Activated T-helper 2 cell treated with anti-CD3 and anti-CD28 coated beads, Interferon-gamma antibody, Interleukin-2, Interleukin-4, amounts not matched to agents 10 μg/mL and 5 μg/mL and 100 μg/mL, durations not matched to agents 14 hours and 24 hours and 36 hours (primary cell): ENCODE measurements at regions of chr2 and their contacts with region 1.

Region 1: GRCh38 chr2:112481050-112481527 is 867 bp upstream of the TTL start:
- DNase-seq: peak; percentile 81
- H3K4me3 Mint-ChIP-seq: peak overlapping the region; percentile 92
- H3K27ac Mint-ChIP-seq: peak overlapping the region; percentile 94
- H3K4me1 Mint-ChIP-seq: peaks cover 22% of the 10 kb centered on the region
- H3K27me3 Mint-ChIP-seq: no peaks in the 10 kb centered on the region

Region 2: GRCh38 chr2:112187805-112188596 is 293.1 kb before region 1 on chr2:
- intact Hi-C with region 1: loop called (anchors 5 kb)
- DNase-seq: peak; percentile 73
- H3K4me3 Mint-ChIP-seq: peak overlapping the region; percentile 31
- H3K27ac Mint-ChIP-seq: peak overlapping the region; percentile 98
- H3K4me1 Mint-ChIP-seq: peaks cover 70% of the 10 kb centered on the region
- H3K27me3 Mint-ChIP-seq: no peaks in the 10 kb centered on the region

Region 3: DNA sequence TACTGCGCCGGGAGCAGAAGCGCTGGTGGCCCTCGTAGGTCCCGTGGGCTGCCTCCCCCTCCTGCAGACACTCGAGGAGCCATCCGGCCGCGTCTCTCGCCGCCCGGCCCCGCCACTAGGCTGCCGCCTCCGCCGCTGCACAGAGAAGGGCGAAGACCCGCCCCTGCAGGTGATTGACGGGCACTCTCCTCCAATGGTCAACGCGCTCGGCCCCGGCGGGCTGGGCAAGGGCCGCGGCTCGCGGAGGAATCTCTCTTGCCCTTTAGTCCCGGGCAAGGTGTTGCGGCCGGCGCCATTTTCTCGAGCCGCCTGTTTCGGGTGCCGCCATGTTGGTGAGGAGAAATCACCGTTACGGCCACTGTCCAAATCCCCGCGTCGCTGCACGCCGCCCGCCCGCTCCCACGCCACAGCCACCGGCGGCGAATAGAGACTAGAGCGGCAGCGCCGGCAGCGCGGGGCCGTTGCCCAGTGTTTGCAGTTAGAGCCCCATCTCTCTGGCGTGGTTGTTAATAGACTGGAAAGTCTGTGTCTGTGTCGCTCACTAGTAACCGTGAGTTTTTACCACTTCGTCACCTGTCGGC is 205.7 kb before region 1 on chr2 and contains the start of gene ZC3H6:
- intact Hi-C with region 1: loop called (anchors 5 kb)
- DNase-seq: peak; percentile 100
- H3K4me3 Mint-ChIP-seq: peak within 1 kb of the TSS; percentile 93
- H3K27ac Mint-ChIP-seq: peak within 1 kb of the TSS; percentile 98
- H3K4me1 Mint-ChIP-seq: peaks cover 10% of the 10 kb centered on the region
- H3K27me3 Mint-ChIP-seq: no peaks in the 10 kb centered on the region
- total RNA-seq, gene ZC3H6: 8.0 and 8.2 TPM in 2 replicates

Region 4: DNA sequence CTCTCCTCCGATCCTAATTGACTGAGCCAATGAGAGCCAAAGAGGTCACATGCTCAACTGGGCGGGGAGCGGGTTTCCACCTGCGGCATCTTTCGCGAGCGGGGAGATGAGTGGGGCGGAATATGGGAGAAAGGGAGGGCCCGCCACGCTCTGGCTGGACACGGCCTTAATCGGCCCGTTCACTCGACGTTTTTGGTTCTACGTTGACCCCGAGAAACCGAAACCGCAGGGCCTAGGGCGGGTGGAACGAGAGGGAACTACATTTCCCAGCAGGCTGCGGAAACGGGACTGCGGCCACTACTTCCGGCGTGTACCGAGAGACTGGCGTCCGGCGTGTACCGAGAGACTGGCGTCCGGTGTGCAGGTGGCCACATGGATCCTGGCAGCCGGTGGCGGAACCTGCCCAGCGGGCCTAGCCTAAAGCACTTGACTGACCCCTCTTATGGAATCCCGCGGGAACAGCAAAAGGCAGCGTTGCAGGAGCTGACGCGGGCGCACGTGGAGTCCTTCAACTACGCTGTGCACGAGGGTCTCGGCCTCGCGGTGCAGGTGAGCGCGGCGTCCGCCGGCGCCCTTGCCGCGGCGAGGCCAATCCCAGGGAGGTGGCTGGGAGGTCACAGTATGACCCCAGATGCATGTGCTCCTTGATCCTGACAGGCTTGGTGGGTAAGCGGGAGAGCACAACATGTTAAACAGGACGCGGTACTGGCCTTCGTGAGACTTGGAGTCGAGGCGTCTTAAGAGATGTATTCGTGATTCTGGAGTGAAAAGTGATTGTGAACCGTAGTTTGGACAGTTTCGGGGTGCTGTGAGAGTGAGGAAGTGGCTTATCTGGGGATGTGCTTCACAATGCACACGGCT is 61.3 kb after region 1 on chr2 and contains the start of gene POLR1B:
- intact Hi-C with region 1: loop called (anchors 1 kb)
- DNase-seq: peak; percentile 78
- H3K4me3 Mint-ChIP-seq: no peak within 1 kb of the TSS
- H3K27ac Mint-ChIP-seq: no peak within 1 kb of the TSS
- H3K4me1 Mint-ChIP-seq: peaks cover 12% of the 10 kb centered on the region
- H3K27me3 Mint-ChIP-seq: no peaks in the 10 kb centered on the region
- total RNA-seq, gene POLR1B: 58.0 and 68.2 TPM in 2 replicates

Region 5: GRCh38 chr2:112577756-112578155 is 96.7 kb after region 1 on chr2:
- intact Hi-C with region 1: no loop called
- DNase-seq: no peak
- H3K4me3 Mint-ChIP-seq: no peak overlapping the region
- H3K27ac Mint-ChIP-seq: no peak overlapping the region
- H3K4me1 Mint-ChIP-seq: peaks cover 7% of the 10 kb centered on the region
- H3K27me3 Mint-ChIP-seq: no peaks in the 10 kb centered on the region

Region 6: GRCh38 chr2:112726497-112727190 is 245.6 kb after region 1 on chr2:
- intact Hi-C with region 1: loop called (anchors 10 kb)
- DNase-seq: peak; percentile 83
- H3K4me3 Mint-ChIP-seq: no peak overlapping the region
- H3K27ac Mint-ChIP-seq: no peak overlapping the region
- H3K4me1 Mint-ChIP-seq: peaks cover 32% of the 10 kb centered on the region
- H3K27me3 Mint-ChIP-seq: peaks cover 2% of the 10 kb centered on the region